HCT116 (cell line): ENCODE measurements at regions of chr1 and their contacts with region 1.

Region 1: GRCh38 chr1:22025368-22026155 is 24.1 kb downstream of the CELA3A start:
- DNase-seq: peak; percentile 82
- ATAC-seq: peak; percentile 84
- H3K4me3 ChIP-seq: peak overlapping the region; percentile 72 to 87
- H3K27ac ChIP-seq: peak overlapping the region; percentile 99
- H3K4me1 ChIP-seq: peaks cover 18 to 34% of the 10 kb centered on the region in 2 experiments
- H3K27me3 ChIP-seq: no peaks in the 10 kb centered on the region
- CTCF ChIP-seq: no peak
- POLR2A ChIP-seq: peak; percentile 83
- RAD21 ChIP-seq: no peak

Region 2: GRCh38 chr1:22052115-22053016 is 26.8 kb after region 1 on chr1 and contains the start of gene CDC42:
- CTCF ChIA-PET with region 1: interaction called, 4 read pairs
- POLR2A ChIA-PET with region 1: interaction called, 18 read pairs
- RAD21 ChIA-PET with region 1: interaction called in 1 of 2 experiments, 7 read pairs
- intact Hi-C with region 1: loop called (anchors 1 kb)
- DNase-seq: peak; percentile 86
- ATAC-seq: peak; percentile 96
- H3K4me3 ChIP-seq: peak within 1 kb of the TSS; percentile 77 to 95
- H3K27ac ChIP-seq: peak within 1 kb of the TSS; percentile 74
- H3K4me1 ChIP-seq: peaks cover 23 to 43% of the 10 kb centered on the region in 2 experiments
- H3K27me3 ChIP-seq: no peaks in the 10 kb centered on the region
- CTCF ChIP-seq: no peak
- POLR2A ChIP-seq: peak; percentile 84
- RAD21 ChIP-seq: no peak
- total RNA-seq, gene CDC42: 217 TPM

Region 3: DNA sequence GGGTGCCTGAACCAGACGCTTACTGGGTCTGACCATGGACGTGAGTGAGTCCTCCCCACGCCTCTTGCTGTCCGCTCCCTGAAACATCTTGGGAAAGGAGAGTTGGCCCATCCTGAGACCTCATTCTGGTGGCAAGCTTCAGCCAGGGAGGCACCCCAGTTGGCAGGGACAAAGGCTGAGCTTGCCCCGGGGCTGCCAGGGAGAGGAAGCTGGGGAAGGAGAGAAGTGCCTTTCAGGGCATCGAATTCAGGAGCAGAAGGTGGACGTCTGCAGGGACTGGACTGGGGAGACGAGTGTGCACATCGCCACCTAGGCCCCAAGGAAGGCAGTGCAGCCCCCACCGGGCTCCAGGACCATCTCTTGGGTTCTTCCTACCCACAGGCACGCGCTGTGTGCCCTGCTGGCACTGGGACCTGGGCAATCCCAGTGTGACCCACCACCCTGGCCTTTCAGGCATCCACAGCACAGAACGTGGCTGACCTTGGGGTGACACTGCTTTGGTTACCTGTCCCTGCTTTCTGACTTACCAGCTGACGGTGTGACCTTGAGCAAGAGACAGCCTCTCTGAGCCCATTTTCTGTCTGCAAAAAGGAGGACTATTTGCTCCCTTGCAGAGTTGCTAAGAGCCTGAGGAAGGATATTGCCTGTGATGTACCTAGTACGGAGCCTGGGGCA is 250.3 kb after region 1 on chr1:
- CTCF ChIA-PET with region 1: no interaction called
- POLR2A ChIA-PET with region 1: no interaction called
- RAD21 ChIA-PET with region 1: no interaction called
- intact Hi-C with region 1: loop called (anchors 5 kb)
- DNase-seq: peak; percentile 29
- ATAC-seq: peak; percentile 99
- H3K4me3 ChIP-seq: no peak overlapping the region
- H3K27ac ChIP-seq: no peak overlapping the region
- H3K4me1 ChIP-seq: peaks cover 8% of the 10 kb centered on the region in 2 experiments; a peak in 3 of 4 replicates
- H3K27me3 ChIP-seq: no peaks in the 10 kb centered on the region
- CTCF ChIP-seq: peak; percentile 45 to 91 (median 79); a peak in 5 of 6 replicates
- POLR2A ChIP-seq: no peak
- RAD21 ChIP-seq: peak; percentile 66